ENCODE measurements at regions of chr2 and their contacts with region 1.

Region 1: DNA sequence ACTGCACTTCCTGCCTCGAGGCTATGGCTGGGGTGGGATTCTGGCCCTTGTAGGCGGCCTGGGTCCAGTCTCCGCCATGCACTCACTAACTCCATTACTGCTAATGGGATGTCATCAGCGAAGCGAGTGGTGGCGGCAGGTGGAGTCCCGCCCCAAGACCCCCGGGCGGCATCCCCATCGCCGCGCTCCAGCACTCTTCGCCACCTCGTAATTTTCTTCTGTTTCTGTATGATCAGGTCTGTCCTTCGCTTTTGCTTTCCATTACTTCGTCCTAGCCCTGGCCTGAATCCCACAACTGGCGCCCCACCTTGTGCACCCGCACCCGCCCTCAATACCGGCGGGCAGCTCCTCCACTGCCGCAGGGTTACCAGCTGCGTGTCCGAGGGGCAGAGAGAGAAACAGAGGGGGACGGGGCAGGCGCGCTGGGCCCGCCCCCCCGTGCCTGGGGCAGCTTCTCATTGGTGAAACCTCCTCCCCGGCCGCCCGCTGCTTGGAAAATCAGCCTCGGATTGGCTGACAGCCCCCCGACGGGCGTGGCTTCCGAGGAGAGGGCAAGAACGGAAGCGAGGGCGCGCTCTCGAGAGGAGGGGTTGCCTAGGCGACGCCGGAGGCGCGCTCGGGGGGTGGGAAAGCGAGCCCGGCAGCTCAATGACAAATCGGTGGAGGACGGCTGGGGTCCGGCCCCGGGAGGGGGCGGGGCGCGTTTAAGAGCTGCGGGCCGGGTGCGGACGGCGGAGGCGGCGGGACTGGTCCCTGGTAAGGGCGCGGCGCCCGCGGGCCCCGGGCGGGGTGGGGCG is at the start of gene RALB:
- DNase-seq: peak; percentile 100
- H3K4me3 ChIP-seq: peak within 1 kb of the TSS; percentile 47 to 83 (median 67)
- H3K27ac ChIP-seq: peak within 1 kb of the TSS; percentile 58
- H3K4me1 ChIP-seq: peaks cover 49% of the 10 kb centered on the region
- H3K27me3 ChIP-seq: no peaks in the 10 kb centered on the region
- CTCF ChIP-seq: no peak
- POLR2A ChIP-seq: peak; percentile 70
- total RNA-seq, gene RALB: 106 and 115 TPM in 2 replicates

Region 2: GRCh38 chr2:120239488-120240287 is 12.7 kb before region 1 on chr2:
- CTCF ChIA-PET with region 1: interaction called, 42 read pairs
- POLR2A ChIA-PET with region 1: interaction called, 29 read pairs
- dilution Hi-C with region 1: no loop called
- intact Hi-C with region 1: loop called (anchors 1 kb)
- DNase-seq: peak; percentile 99
- H3K4me3 ChIP-seq: no peak overlapping the region
- H3K27ac ChIP-seq: peak overlapping the region; percentile 37
- H3K4me1 ChIP-seq: peaks cover 34% of the 10 kb centered on the region
- H3K27me3 ChIP-seq: no peaks in the 10 kb centered on the region
- CTCF ChIP-seq: peak in 1 of 2 donors; percentile 4
- POLR2A ChIP-seq: peak; percentile 57

Region 3: DNA sequence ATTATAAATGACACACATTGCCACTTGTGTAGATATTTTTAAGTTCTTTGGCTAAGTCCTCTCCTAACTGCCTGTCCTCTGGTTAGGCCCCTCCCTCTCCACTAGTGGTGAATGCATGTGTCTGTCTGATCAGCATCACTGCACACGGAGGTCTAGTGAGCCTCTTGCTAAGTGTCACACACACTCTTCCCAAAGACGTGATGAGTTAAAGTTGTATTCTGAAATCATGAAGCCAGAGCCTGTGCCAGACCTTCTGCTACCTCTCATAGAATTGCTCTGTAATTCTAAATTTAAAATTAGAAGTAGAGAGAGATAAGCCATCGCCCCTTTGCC is 41.6 kb after region 1 on chr2:
- CTCF ChIA-PET with region 1: interaction called, 3 read pairs
- POLR2A ChIA-PET with region 1: no interaction called
- dilution Hi-C with region 1: no loop called
- intact Hi-C with region 1: loop called (anchors 2 kb)
- DNase-seq: no peak
- H3K4me3 ChIP-seq: no peak overlapping the region
- H3K27ac ChIP-seq: no peak overlapping the region
- H3K4me1 ChIP-seq: peaks cover 14% of the 10 kb centered on the region
- H3K27me3 ChIP-seq: no peaks in the 10 kb centered on the region
- CTCF ChIP-seq: no peak
- POLR2A ChIP-seq: no peak